B cell (primary cell): ENCODE measurements at regions of chr2 and their contacts with region 1.

Region 1: GRCh38 chr2:134411828-134412638 is 158.2 kb downstream of the MGAT5 start:
- DNase-seq: peak; percentile 89
- ATAC-seq: peak; percentile 93
- H3K4me3 ChIP-seq: peak overlapping the region in 2 of 5 experiments; percentile 6 to 18
- H3K4me3 Mint-ChIP-seq: peak overlapping the region; percentile 59
- H3K27ac ChIP-seq: peak overlapping the region; percentile 64 to 74
- H3K27ac Mint-ChIP-seq: peak overlapping the region; percentile 86
- H3K4me1 ChIP-seq: peaks cover 45 to 50% of the 10 kb centered on the region in 2 donors
- H3K4me1 Mint-ChIP-seq: peaks cover 49% of the 10 kb centered on the region
- H3K27me3 ChIP-seq: no peaks in the 10 kb centered on the region
- H3K27me3 Mint-ChIP-seq: no peaks in the 10 kb centered on the region
- CTCF ChIP-seq: peak; percentile 81

Region 2: GRCh38 chr2:133844214-133844892 is 567.7 kb before region 1 on chr2:
- CTCF ChIA-PET with region 1: interaction called, 18 read pairs
- POLR2A ChIA-PET with region 1: no interaction called
- intact Hi-C with region 1: no loop called
- DNase-seq: peak; percentile 68
- ATAC-seq: no peak
- H3K4me3 ChIP-seq: no peak overlapping the region
- H3K4me3 Mint-ChIP-seq: no peak overlapping the region
- H3K27ac ChIP-seq: no peak overlapping the region
- H3K27ac Mint-ChIP-seq: no peak overlapping the region
- H3K4me1 ChIP-seq: no peaks in the 10 kb centered on the region
- H3K4me1 Mint-ChIP-seq: peaks cover 6% of the 10 kb centered on the region
- H3K27me3 ChIP-seq: peaks cover 0 to 11% (median 3%) of the 10 kb centered on the region in 4 experiments
- H3K27me3 Mint-ChIP-seq: peaks cover 11% of the 10 kb centered on the region
- CTCF ChIP-seq: peak; percentile 95

Region 3: DNA sequence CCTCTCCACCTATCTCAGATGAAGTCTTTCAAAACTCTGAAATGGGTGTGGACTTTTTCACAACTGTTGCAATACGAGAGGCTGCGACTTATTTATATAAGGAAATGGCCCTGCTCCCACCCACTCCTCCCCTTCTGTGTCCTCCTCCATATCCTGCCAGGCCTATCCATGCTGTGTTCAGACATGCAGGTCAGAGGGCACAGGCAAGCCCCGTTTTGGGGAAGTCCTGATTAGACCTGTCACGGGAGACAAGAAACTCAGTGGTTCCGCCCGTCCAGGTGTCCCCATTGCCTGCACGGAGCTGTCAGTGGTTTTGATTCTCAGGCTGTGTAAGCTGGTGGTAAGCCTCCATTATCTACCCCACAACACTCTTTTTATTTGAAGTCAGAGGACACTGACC is 257.8 kb before region 1 on chr2:
- CTCF ChIA-PET with region 1: interaction called, 10 read pairs
- POLR2A ChIA-PET with region 1: no interaction called
- intact Hi-C with region 1: no loop called
- DNase-seq: peak; percentile 77
- ATAC-seq: peak; percentile 68
- H3K4me3 ChIP-seq: no peak overlapping the region
- H3K4me3 Mint-ChIP-seq: peak overlapping the region; percentile 57
- H3K27ac ChIP-seq: peak overlapping the region in 1 of 2 donors; percentile 84
- H3K27ac Mint-ChIP-seq: peak overlapping the region; percentile 85
- H3K4me1 ChIP-seq: peaks cover 43 to 60% of the 10 kb centered on the region in 2 donors
- H3K4me1 Mint-ChIP-seq: peaks cover 81% of the 10 kb centered on the region
- H3K27me3 ChIP-seq: no peaks in the 10 kb centered on the region
- H3K27me3 Mint-ChIP-seq: no peaks in the 10 kb centered on the region
- CTCF ChIP-seq: no peak

Region 4: DNA sequence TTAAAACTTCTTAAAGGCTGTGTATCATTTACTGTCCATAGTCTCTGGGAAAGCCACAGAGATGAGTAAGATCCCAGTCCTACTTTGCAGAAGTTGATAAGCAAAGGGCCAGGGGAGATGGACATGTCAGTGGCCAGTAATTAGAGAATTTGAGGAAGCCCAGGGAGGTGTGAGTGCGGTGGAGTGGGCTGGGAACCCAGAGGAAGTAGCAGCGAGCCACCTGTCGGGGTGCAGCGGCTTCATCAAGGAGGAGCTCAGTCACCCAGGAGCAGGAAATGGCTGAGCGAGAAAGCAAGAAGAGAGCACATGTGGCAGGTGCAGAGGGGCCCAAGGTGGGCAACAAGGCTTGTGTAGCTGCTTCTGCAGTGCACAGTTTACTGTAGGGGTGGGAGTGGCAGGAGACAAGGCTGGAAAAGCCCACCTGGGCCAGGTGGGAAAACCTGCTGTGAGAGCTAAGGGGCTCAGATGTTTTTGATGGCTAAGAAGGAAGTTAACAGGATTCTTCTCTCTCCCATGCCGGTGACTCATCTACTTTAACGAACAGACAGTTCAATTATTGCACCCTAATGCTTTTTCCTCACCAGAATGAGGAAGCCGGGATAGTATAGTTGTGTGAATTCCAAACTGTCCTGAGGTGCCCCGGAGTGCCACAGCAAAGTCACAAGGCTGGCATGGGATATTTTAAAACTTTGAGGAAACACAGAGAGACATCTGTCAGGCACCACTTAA is 192.9 kb before region 1 on chr2:
- CTCF ChIA-PET with region 1: interaction called, 14 read pairs
- POLR2A ChIA-PET with region 1: no interaction called
- intact Hi-C with region 1: no loop called
- DNase-seq: peak; percentile 76
- ATAC-seq: peak; percentile 60
- H3K4me3 ChIP-seq: peak overlapping the region in 2 of 5 experiments; percentile 18 to 21
- H3K4me3 Mint-ChIP-seq: peak overlapping the region; percentile 67
- H3K27ac ChIP-seq: peak overlapping the region; percentile 74 to 84
- H3K27ac Mint-ChIP-seq: peak overlapping the region; percentile 91
- H3K4me1 ChIP-seq: peaks cover 52 to 55% of the 10 kb centered on the region in 2 donors
- H3K4me1 Mint-ChIP-seq: peaks cover 77% of the 10 kb centered on the region
- H3K27me3 ChIP-seq: no peaks in the 10 kb centered on the region
- H3K27me3 Mint-ChIP-seq: no peaks in the 10 kb centered on the region
- CTCF ChIP-seq: no peak

Region 5: GRCh38 chr2:134253804-134254203 is 158.2 kb before region 1 on chr2 and contains the start of gene MGAT5:
- CTCF ChIA-PET with region 1: interaction called, 28 read pairs
- POLR2A ChIA-PET with region 1: no interaction called
- intact Hi-C with region 1: no loop called
- DNase-seq: peak; percentile 85
- ATAC-seq: peak; percentile 59
- H3K4me3 ChIP-seq: peak within 1 kb of the TSS; percentile 30 to 66 (median 62)
- H3K4me3 Mint-ChIP-seq: peak within 1 kb of the TSS; percentile 72
- H3K27ac ChIP-seq: peak within 1 kb of the TSS; percentile 83 to 87
- H3K27ac Mint-ChIP-seq: peak within 1 kb of the TSS; percentile 90
- H3K4me1 ChIP-seq: peaks cover 92 to 95% of the 10 kb centered on the region in 2 donors
- H3K4me1 Mint-ChIP-seq: peaks cover 90% of the 10 kb centered on the region
- H3K27me3 ChIP-seq: no peaks in the 10 kb centered on the region
- H3K27me3 Mint-ChIP-seq: no peaks in the 10 kb centered on the region
- CTCF ChIP-seq: no peak
- total RNA-seq, gene MGAT5: 177 and 184 TPM in 2 replicates

Region 6: GRCh38 chr2:134336352-134336751 is 75.7 kb before region 1 on chr2:
- CTCF ChIA-PET with region 1: interaction called, 10 read pairs
- POLR2A ChIA-PET with region 1: no interaction called
- intact Hi-C with region 1: no loop called
- DNase-seq: no peak
- ATAC-seq: no peak
- H3K4me3 ChIP-seq: no peak overlapping the region
- H3K4me3 Mint-ChIP-seq: no peak overlapping the region
- H3K27ac ChIP-seq: peak overlapping the region in 1 of 2 donors; percentile 42
- H3K27ac Mint-ChIP-seq: peak overlapping the region; percentile 64
- H3K4me1 ChIP-seq: peaks cover 9 to 24% of the 10 kb centered on the region in 2 donors
- H3K4me1 Mint-ChIP-seq: peaks cover 65% of the 10 kb centered on the region
- H3K27me3 ChIP-seq: no peaks in the 10 kb centered on the region
- H3K27me3 Mint-ChIP-seq: no peaks in the 10 kb centered on the region
- CTCF ChIP-seq: no peak

Region 7: DNA sequence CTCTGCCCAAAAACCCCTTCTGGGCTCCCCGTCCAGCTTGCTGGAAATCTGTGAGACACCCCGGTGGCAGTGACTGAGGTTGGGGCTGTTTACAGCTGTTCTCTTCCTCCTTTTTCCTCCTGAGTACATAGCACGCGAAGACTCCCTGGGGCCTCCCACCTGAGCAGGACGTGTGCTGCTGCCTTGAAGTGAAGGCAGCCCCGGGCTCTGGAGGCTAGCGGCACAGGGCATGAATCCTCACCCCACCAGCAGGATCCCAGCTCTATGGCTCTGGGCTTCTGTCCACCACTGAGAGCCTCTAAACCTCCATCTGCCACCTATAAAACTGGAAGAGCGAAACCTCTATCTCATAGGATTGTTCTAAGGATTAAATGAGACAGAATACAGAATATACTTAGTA is 124.3 kb after region 1 on chr2:
- CTCF ChIA-PET with region 1: no interaction called
- POLR2A ChIA-PET with region 1: no interaction called
- intact Hi-C with region 1: no loop called
- DNase-seq: no peak
- ATAC-seq: no peak
- H3K4me3 ChIP-seq: no peak overlapping the region
- H3K4me3 Mint-ChIP-seq: no peak overlapping the region
- H3K27ac ChIP-seq: no peak overlapping the region
- H3K27ac Mint-ChIP-seq: no peak overlapping the region
- H3K4me1 ChIP-seq: no peaks in the 10 kb centered on the region
- H3K4me1 Mint-ChIP-seq: no peaks in the 10 kb centered on the region
- H3K27me3 ChIP-seq: no peaks in the 10 kb centered on the region
- H3K27me3 Mint-ChIP-seq: no peaks in the 10 kb centered on the region
- CTCF ChIP-seq: no peak